IMR-90 (cell line): ENCODE measurements at regions of chr7 and their contacts with region 1.

Region 1: DNA sequence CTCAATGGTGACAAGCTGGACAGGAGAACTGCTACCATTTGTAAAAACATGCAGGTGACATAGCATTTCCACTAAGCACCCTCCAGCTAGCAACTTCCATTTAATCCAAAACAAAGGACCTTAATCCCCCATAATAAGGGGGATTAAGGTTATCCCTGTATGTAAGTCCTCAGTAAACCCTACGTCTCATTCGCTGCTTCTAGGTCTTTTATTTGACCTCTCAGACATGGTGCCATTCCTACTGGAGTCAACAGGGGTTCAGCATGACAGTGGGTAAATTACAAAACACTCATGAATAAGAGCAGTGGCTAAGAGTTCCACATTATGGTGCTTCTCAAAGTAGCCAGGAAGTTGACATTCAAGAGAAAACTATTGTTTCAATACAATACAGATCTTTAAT is 121.8 kb upstream of the CAV2 start:
- DNase-seq: no peak
- ATAC-seq: no peak
- H3K4me3 ChIP-seq: no peak overlapping the region
- H3K27ac ChIP-seq: no peak overlapping the region
- H3K4me1 ChIP-seq: peaks cover 2% of the 10 kb centered on the region; the same call in 1 of the 2 replicates
- H3K27me3 ChIP-seq: no peaks in the 10 kb centered on the region
- CTCF ChIP-seq: no peak
- POLR2A ChIP-seq: no peak
- RAD21 ChIP-seq: no peak

Region 2: DNA sequence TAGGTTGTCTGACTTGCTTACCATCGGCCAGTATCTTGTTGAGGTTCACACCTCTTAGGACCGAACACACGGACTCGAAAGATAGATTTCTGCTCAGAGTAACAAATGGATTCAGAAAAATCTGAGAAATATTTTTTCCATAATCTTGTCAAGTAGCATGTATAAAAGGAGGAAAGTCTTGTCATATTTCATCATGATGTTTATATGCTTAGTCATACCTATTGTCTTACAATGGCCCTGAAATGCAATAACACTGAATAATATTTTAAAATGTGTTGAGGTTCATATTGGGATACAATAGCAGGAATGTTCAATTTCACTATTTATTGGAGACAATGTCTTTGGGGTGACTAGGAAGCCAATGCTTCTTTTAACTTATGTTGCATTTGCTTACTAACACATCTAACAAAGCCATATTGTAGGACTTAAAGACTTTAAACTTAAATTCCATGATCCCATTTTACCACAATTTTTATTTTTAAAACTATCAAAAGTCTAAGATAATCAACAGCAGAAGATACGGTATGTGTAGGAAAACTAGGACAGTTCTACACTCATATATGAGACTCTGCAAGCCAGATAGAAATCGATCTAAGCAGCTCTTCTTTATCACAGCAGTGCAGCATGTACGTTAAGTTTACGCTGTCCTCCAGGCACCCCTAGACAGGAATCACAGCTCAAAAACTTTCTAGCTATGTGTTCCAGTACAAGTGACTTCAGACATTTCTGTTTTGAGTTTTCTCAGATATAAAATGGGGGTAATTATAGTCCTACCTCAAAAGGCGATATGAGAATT is 13.9 kb before region 1 on chr7:
- CTCF ChIA-PET with region 1: no interaction called
- POLR2A ChIA-PET with region 1: no interaction called
- dilution Hi-C with region 1: no loop called
- in situ Hi-C with region 1: no loop called
- intact Hi-C with region 1: loop called (anchors 2 kb)
- DNase-seq: no peak
- ATAC-seq: no peak
- H3K4me3 ChIP-seq: no peak overlapping the region
- H3K27ac ChIP-seq: no peak overlapping the region
- H3K4me1 ChIP-seq: no peaks in the 10 kb centered on the region
- H3K27me3 ChIP-seq: no peaks in the 10 kb centered on the region
- CTCF ChIP-seq: no peak
- POLR2A ChIP-seq: no peak
- RAD21 ChIP-seq: no peak